CD4-positive, alpha-beta T cell (primary cell): ENCODE measurements at regions of chr11 and their contacts with region 1.

Region 1: GRCh38 chr11:35412285-35412684 is 7.1 kb downstream of the SLC1A2 start:
- DNase-seq: no peak
- ATAC-seq: no peak
- H3K4me3 ChIP-seq: no peak overlapping the region
- H3K4me3 Mint-ChIP-seq: no peak overlapping the region
- H3K27ac ChIP-seq: no peak overlapping the region
- H3K27ac Mint-ChIP-seq: no peak overlapping the region
- H3K4me1 ChIP-seq: no peaks in the 10 kb centered on the region
- H3K4me1 Mint-ChIP-seq: no peaks in the 10 kb centered on the region
- H3K27me3 ChIP-seq: peaks cover 16 to 48% of the 10 kb centered on the region in 2 experiments
- H3K27me3 Mint-ChIP-seq: peaks cover 57% of the 10 kb centered on the region
- CTCF ChIP-seq: peak; percentile 39

Region 2: DNA sequence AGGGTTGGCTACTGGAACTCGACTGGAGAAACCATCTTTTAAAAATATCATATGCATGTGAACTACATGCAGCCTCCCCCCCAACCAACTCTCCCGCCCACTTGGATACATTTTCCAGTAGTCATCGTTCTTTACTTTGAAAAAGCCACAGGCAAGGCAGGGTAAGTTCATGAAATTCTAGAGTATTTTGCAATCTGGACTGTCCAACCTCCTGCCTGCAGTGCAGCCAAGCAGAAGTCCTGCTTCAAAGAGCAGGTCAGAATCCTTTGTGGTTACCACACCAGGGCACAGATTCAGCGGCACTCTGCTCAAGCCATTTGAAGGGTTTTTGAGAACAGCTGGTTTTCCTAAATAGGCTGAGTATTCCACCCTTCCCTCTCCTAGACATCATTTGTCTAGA is 910.8 kb before region 1 on chr11:
- CTCF ChIA-PET with region 1: no interaction called
- POLR2A ChIA-PET with region 1: no interaction called
- intact Hi-C with region 1: loop called in 1 of 2 experiments (anchors 10 kb)
- DNase-seq: peak in 1 of 14 experiments; percentile 3
- ATAC-seq: no peak
- H3K4me3 ChIP-seq: no peak overlapping the region
- H3K4me3 Mint-ChIP-seq: no peak overlapping the region
- H3K27ac ChIP-seq: no peak overlapping the region
- H3K27ac Mint-ChIP-seq: no peak overlapping the region
- H3K4me1 ChIP-seq: no peaks in the 10 kb centered on the region
- H3K4me1 Mint-ChIP-seq: no peaks in the 10 kb centered on the region
- H3K27me3 ChIP-seq: peaks cover 0 to 3% of the 10 kb centered on the region in 2 experiments
- H3K27me3 Mint-ChIP-seq: no peaks in the 10 kb centered on the region
- CTCF ChIP-seq: no peak

Region 3: DNA sequence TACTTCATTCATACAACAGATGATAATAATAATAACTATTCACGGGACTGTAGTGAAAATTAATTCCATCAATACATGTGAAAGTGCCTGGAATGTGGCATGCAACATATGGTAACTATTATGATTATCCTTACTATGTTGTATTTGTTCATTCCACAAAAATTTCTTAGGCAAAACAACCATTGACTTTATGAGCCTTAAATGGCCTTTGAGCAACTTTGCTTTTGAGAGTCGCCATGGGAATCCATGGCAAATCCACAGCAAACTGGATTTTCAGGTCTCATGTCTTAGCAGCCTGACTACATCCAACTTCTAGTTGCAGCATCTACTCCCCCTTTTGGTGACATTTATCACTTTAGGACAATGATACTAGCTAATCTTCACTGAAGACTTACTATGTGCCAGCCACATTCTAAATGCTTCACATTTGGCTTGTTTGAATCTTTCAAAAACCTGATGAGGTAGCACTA is 49.7 kb before region 1 on chr11:
- CTCF ChIA-PET with region 1: no interaction called
- POLR2A ChIA-PET with region 1: no interaction called
- intact Hi-C with region 1: no loop called
- DNase-seq: peak in 2 of 14 experiments; percentile 9 to 20
- ATAC-seq: no peak
- H3K4me3 ChIP-seq: no peak overlapping the region
- H3K4me3 Mint-ChIP-seq: no peak overlapping the region
- H3K27ac ChIP-seq: no peak overlapping the region
- H3K27ac Mint-ChIP-seq: no peak overlapping the region
- H3K4me1 ChIP-seq: peaks cover 7% of the 10 kb centered on the region
- H3K4me1 Mint-ChIP-seq: no peaks in the 10 kb centered on the region
- H3K27me3 ChIP-seq: no peaks in the 10 kb centered on the region
- H3K27me3 Mint-ChIP-seq: no peaks in the 10 kb centered on the region
- CTCF ChIP-seq: no peak

Region 4: DNA sequence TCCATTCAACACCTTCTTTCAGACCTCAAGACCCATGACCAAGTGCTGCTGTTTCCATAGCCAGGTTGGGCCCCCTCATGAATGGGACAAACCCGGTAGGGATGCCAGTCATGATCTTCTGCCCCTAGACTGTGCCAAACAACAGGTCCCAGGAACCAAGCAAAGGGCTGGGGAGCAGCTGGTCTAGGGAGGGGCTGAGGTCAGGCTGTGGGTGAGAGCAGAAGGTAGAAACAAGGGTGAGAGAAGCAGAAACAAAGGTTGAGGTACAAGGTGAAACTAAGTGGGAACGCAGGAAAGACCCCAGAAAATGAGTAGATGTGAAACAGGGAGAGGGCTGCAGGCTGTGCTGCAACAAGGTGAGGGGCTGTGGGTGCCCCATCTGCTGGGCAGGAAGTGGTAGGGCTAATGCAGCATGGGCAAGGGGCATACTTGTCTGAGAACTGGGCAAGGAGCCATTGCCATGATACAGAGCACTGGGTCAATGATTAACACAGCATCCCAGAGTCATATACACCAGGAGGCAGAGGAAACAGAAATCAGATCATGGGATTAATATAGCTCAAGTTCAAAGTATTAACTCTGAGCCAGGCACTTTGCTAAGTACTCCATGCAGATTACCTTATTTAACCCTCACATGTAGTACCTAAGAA is 38.9 kb before region 1 on chr11:
- CTCF ChIA-PET with region 1: no interaction called
- POLR2A ChIA-PET with region 1: no interaction called
- intact Hi-C with region 1: no loop called
- DNase-seq: peak in 1 of 14 experiments; percentile 15
- ATAC-seq: no peak
- H3K4me3 ChIP-seq: no peak overlapping the region
- H3K4me3 Mint-ChIP-seq: no peak overlapping the region
- H3K27ac ChIP-seq: no peak overlapping the region
- H3K27ac Mint-ChIP-seq: no peak overlapping the region
- H3K4me1 ChIP-seq: no peaks in the 10 kb centered on the region
- H3K4me1 Mint-ChIP-seq: no peaks in the 10 kb centered on the region
- H3K27me3 ChIP-seq: no peaks in the 10 kb centered on the region
- H3K27me3 Mint-ChIP-seq: no peaks in the 10 kb centered on the region
- CTCF ChIP-seq: no peak

Region 5: DNA sequence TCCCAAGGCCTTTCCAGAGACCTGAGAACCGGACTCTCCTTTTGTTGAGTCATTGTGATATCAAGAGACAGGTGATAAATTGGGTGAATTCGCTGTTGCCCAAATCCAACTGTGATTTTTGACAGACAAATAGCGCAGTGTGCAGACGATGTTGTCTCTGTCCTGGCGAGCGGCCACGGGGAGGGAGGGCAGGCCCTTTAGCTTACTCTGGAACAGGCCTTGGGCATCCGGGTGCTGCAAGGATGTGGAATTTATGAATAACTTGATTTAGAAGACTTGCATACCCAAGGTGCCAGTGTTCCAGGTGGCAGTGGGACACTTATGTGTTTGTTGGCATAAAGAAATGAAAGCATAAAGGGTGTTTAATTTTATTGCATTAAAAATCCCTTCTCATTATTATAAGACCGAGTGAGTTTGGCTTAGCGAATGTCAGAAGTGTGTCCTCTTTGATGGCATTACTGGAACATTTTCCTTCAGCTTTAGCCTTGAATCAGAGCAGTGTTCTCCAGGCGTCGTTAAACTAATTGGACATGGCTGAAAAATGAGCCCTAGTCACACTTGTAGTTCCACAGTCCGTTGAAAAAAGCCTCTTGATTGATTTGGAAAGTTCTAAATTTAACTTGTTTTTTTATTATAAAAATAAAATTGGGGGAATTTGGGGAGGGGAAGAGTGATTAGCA is 540.9 kb after region 1 on chr11:
- CTCF ChIA-PET with region 1: no interaction called
- POLR2A ChIA-PET with region 1: no interaction called
- intact Hi-C with region 1: no loop called
- DNase-seq: no peak
- ATAC-seq: no peak
- H3K4me3 ChIP-seq: no peak overlapping the region
- H3K4me3 Mint-ChIP-seq: no peak overlapping the region
- H3K27ac ChIP-seq: no peak overlapping the region
- H3K27ac Mint-ChIP-seq: no peak overlapping the region
- H3K4me1 ChIP-seq: no peaks in the 10 kb centered on the region
- H3K4me1 Mint-ChIP-seq: no peaks in the 10 kb centered on the region
- H3K27me3 ChIP-seq: no peaks in the 10 kb centered on the region
- H3K27me3 Mint-ChIP-seq: peaks cover 13% of the 10 kb centered on the region
- CTCF ChIP-seq: no peak